CD14-positive monocyte (primary cell): ENCODE measurements at regions of chr11 and their contacts with region 1.

Region 1: DNA sequence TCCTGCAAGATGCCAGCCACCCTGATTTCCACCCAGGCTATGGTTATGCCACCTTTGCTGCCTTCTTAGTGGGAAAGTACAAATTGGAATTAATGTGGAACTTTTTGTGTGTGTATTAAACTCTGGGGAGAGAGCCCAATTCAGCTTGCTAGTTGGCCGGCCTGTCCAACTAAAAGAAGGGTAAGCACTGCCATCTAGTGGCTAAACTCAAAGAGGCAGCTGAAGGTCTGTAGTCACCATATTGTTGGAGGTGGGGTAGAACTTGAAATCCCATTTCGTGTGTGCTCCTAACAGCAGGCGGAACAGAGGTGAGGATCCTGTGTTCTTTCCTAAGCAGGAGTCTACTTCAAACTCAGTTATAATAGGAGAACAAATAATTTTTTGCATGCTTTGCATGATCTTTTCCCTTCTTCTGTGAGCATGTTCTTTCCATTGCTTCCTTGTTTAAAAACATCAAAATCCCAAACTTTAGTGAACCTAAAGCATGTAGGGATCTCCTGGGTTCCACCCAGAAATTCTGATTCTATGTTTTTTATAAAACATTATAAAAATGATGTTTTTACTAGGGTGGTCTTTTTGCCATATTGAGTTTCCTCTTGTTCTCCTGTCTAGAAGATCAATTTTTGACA is 138.8 kb upstream of the SORL1-AS1 start:
- DNase-seq: peak; percentile 73 to 85 (median 77)
- H3K4me3 ChIP-seq: no peak overlapping the region
- H3K4me3 Mint-ChIP-seq: no peak overlapping the region
- H3K27ac ChIP-seq: peak overlapping the region in 1 of 2 donors; percentile 93
- H3K27ac Mint-ChIP-seq: peak overlapping the region in 6 of 7 donors; percentile 62 to 98 (median 96)
- H3K4me1 ChIP-seq: peaks cover 38 to 40% of the 10 kb centered on the region in 2 donors
- H3K4me1 Mint-ChIP-seq: peaks cover 38% of the 10 kb centered on the region
- H3K27me3 ChIP-seq: no peaks in the 10 kb centered on the region
- H3K27me3 Mint-ChIP-seq: peaks cover 0 to 3% (median 0%) of the 10 kb centered on the region in 3 donors
- CTCF ChIP-seq: peak; percentile 79

Region 2: DNA sequence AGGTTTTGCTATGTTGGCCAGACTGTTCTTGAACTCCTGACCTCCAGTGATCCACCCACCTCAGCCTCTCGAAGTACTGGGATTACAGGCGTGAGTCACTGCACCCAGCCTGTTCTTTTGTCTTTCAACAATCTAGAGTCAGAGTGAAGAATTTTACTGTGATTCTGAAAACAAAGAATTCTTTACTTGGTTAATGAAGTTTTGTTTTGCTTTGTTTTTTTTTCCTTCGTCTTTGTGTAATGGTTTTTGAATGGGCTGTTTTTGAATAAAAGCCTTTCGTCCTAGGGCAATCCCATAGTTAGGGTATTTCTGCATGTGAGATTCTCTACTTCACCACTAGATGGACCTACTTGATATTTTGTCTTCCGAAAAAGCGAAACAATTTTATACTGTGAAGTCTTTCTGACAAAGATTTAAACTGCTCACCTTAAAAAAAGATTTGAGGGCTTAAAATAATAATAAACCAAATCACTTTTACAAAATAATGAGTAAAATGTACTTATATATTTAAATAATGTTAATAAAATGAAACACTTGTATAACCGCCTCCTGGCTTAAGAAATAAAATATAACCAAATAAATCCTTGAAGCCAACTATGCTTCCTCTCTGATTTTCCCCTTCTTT is 342.4 kb before region 1 on chr11:
- intact Hi-C with region 1: loop called in 1 of 2 experiments (anchors 5 kb)
- DNase-seq: peak in 2 of 3 donors; percentile 21 to 36
- H3K4me3 ChIP-seq: no peak overlapping the region
- H3K4me3 Mint-ChIP-seq: no peak overlapping the region
- H3K27ac ChIP-seq: no peak overlapping the region
- H3K27ac Mint-ChIP-seq: no peak overlapping the region
- H3K4me1 ChIP-seq: no peaks in the 10 kb centered on the region
- H3K4me1 Mint-ChIP-seq: peaks cover 2% of the 10 kb centered on the region
- H3K27me3 ChIP-seq: no peaks in the 10 kb centered on the region
- H3K27me3 Mint-ChIP-seq: peaks cover 0 to 3% (median 2%) of the 10 kb centered on the region in 3 donors
- CTCF ChIP-seq: peak; percentile 80

Region 3: GRCh38 chr11:121318848-121319834 is 272.4 kb before region 1 on chr11:
- intact Hi-C with region 1: loop called (anchors 2 to 5 kb)
- DNase-seq: peak; percentile 61 to 71 (median 68)
- H3K4me3 ChIP-seq: no peak overlapping the region
- H3K4me3 Mint-ChIP-seq: no peak overlapping the region
- H3K27ac ChIP-seq: no peak overlapping the region
- H3K27ac Mint-ChIP-seq: no peak overlapping the region
- H3K4me1 ChIP-seq: no peaks in the 10 kb centered on the region
- H3K4me1 Mint-ChIP-seq: peaks cover 15% of the 10 kb centered on the region
- H3K27me3 ChIP-seq: no peaks in the 10 kb centered on the region
- H3K27me3 Mint-ChIP-seq: no peaks in the 10 kb centered on the region
- CTCF ChIP-seq: peak; percentile 87

Region 4: DNA sequence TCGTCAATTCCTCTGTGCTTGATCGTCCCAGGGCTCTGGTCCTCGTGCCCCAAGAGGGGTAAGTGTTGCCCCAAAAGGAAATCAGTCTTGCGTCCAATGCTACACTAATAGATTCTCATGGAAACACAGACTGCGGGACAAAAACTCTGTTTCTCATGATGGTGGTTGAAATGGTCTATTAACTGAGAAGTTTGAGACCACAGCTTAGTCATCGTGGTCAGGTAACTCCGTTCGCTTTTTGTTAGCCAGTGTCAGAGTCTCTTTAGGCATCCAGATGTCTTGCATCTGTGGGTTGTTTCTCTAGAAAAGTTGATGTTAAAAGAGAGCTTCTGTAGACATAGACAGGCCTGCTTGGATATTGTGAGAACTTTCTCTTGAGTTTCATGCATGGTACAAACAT is 34.2 kb before region 1 on chr11:
- intact Hi-C with region 1: loop called in 1 of 2 experiments (anchors 5 kb)
- DNase-seq: no peak
- H3K4me3 ChIP-seq: no peak overlapping the region
- H3K4me3 Mint-ChIP-seq: no peak overlapping the region
- H3K27ac ChIP-seq: peak overlapping the region in 1 of 2 donors; percentile 27
- H3K27ac Mint-ChIP-seq: peak overlapping the region in 3 of 7 donors; percentile 41 to 74 (median 70)
- H3K4me1 ChIP-seq: no peaks in the 10 kb centered on the region
- H3K4me1 Mint-ChIP-seq: peaks cover 2% of the 10 kb centered on the region
- H3K27me3 ChIP-seq: no peaks in the 10 kb centered on the region
- H3K27me3 Mint-ChIP-seq: no peaks in the 10 kb centered on the region
- CTCF ChIP-seq: no peak

Region 5: GRCh38 chr11:121575250-121575962 is 16.1 kb before region 1 on chr11:
- intact Hi-C with region 1: loop called (anchors 2 kb)
- DNase-seq: peak; percentile 97 to 99 (median 99)
- H3K4me3 ChIP-seq: no peak overlapping the region
- H3K4me3 Mint-ChIP-seq: peak overlapping the region in 1 of 2 donors; percentile 48
- H3K27ac ChIP-seq: peak overlapping the region; percentile 7 to 76
- H3K27ac Mint-ChIP-seq: peak overlapping the region; percentile 81 to 96 (median 86)
- H3K4me1 ChIP-seq: peaks cover 47 to 52% of the 10 kb centered on the region in 2 donors
- H3K4me1 Mint-ChIP-seq: peaks cover 66% of the 10 kb centered on the region
- H3K27me3 ChIP-seq: no peaks in the 10 kb centered on the region
- H3K27me3 Mint-ChIP-seq: peaks cover 0 to 2% (median 0%) of the 10 kb centered on the region in 3 donors
- CTCF ChIP-seq: no peak